ENCODE measurements at regions of chr1 and their contacts with region 1.

Region 1: GRCh38 chr1:180482425-180483275 is 19.7 kb downstream of the ACBD6 start:
- DNase-seq: peak; percentile 79
- H3K4me3 Mint-ChIP-seq: no peak overlapping the region
- H3K27ac Mint-ChIP-seq: no peak overlapping the region
- H3K4me1 Mint-ChIP-seq: peaks cover 17% of the 10 kb centered on the region
- H3K27me3 Mint-ChIP-seq: no peaks in the 10 kb centered on the region
- CTCF ChIP-seq: peak; percentile 68

Region 2: DNA sequence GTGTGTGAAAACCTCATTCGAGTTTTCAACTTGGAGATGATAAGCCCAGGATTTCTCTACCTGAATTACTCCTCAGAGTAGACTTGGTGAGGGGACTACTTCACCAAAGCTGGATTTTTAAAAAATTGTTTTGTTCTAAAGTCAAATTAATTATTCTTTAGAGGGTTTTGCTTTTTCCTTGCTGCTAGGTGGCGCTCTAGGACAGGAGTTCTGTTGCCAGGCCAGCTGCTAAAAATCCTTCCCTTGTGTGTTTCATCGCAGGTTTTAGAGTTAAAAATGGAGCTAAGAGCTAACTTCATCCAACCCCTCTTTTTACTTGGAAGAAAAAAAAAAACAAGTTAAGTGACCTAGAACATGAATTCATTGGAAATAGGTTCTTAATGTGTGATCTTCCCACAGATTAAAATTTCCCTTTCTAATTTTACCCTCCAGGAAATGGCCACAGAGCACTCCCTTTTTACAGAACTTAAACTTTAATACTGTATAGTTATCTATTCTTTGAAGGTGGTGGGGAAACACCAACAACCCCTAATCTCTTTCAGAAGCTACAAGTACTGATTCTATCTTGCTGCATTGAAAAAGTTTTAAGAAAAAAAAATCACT is 776.2 kb before region 1 on chr1:
- CTCF ChIA-PET with region 1: interaction called, 5 read pairs
- POLR2A ChIA-PET with region 1: no interaction called
- intact Hi-C with region 1: loop called (anchors 2 kb)
- DNase-seq: peak; percentile 78
- H3K4me3 Mint-ChIP-seq: no peak overlapping the region
- H3K27ac Mint-ChIP-seq: no peak overlapping the region
- H3K4me1 Mint-ChIP-seq: no peaks in the 10 kb centered on the region
- H3K27me3 Mint-ChIP-seq: peaks cover 18% of the 10 kb centered on the region
- CTCF ChIP-seq: peak; percentile 92

Region 3: GRCh38 chr1:180252638-180253536 is 229.8 kb before region 1 on chr1:
- CTCF ChIA-PET with region 1: interaction called, 57 read pairs
- POLR2A ChIA-PET with region 1: interaction called, 4 read pairs
- intact Hi-C with region 1: loop called (anchors 1 kb)
- DNase-seq: peak; percentile 84
- H3K4me3 Mint-ChIP-seq: no peak overlapping the region
- H3K27ac Mint-ChIP-seq: no peak overlapping the region
- H3K4me1 Mint-ChIP-seq: peaks cover 6% of the 10 kb centered on the region
- H3K27me3 Mint-ChIP-seq: peaks cover 5% of the 10 kb centered on the region
- CTCF ChIP-seq: peak; percentile 97

Region 4: DNA sequence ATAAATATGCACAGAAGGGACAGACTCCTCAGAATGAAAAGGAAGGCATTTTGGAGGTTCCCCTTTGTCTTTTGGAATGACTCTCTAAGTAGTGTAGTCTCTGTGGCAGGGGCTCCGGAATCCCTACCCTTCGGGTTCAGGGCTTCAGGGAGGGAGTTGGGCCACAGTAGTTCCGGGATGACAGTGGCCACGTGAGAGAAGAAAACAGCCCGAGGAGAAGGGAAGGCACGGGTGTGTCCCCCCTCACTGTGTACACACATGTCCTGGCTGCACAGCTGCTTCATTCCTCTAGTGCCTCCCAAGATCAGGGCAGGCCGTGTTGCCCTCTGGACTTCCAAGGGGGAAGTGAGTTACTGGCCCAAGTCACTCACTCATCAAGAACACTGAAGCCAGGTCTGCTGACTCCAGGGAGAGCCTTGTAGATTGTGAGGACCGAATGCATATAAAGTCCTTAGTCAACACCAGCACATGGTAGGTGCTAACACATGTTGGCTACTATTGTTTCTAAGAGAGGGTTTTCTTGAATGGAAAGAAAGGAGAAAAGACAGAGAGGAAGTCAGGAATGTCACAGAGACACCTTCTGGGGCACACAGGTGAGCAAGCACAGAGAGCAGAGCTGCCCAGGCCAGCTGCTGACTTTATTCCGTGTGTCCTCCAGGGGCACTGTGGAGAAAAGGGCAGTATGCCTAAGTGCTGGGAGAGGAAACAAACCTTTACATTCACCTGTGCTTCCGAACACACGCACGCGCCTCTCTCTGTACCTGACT is 212.7 kb before region 1 on chr1:
- CTCF ChIA-PET with region 1: interaction called, 21 read pairs
- POLR2A ChIA-PET with region 1: no interaction called
- intact Hi-C with region 1: no loop called
- DNase-seq: peak; percentile 62
- H3K4me3 Mint-ChIP-seq: no peak overlapping the region
- H3K27ac Mint-ChIP-seq: no peak overlapping the region
- H3K4me1 Mint-ChIP-seq: no peaks in the 10 kb centered on the region
- H3K27me3 Mint-ChIP-seq: no peaks in the 10 kb centered on the region
- CTCF ChIP-seq: peak; percentile 48

Region 5: DNA sequence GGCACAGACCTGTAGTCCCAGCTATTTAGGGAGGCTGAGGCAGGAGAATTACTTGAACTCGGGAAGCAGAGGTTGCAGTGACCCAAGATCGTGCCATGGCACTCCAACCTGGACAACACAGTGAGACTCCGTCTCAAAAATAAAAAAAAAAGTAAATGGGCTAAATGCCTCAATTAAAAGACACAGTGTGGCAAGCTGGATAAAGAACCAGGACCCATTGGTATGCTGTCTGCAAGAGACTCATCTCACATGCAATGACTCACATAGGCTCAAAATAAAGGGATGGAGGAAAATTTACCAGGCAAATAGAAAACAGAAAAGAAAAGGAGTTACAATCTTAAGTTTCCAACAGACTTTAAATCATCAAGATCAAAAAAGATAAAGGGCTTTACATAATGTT is 20.5 kb before region 1 on chr1:
- CTCF ChIA-PET with region 1: interaction called, 91 read pairs
- POLR2A ChIA-PET with region 1: interaction called, 4 read pairs
- intact Hi-C with region 1: no loop called
- DNase-seq: peak; percentile 8
- H3K4me3 Mint-ChIP-seq: no peak overlapping the region
- H3K27ac Mint-ChIP-seq: no peak overlapping the region
- H3K4me1 Mint-ChIP-seq: peaks cover 5% of the 10 kb centered on the region
- H3K27me3 Mint-ChIP-seq: no peaks in the 10 kb centered on the region
- CTCF ChIP-seq: no peak

Region 6: DNA sequence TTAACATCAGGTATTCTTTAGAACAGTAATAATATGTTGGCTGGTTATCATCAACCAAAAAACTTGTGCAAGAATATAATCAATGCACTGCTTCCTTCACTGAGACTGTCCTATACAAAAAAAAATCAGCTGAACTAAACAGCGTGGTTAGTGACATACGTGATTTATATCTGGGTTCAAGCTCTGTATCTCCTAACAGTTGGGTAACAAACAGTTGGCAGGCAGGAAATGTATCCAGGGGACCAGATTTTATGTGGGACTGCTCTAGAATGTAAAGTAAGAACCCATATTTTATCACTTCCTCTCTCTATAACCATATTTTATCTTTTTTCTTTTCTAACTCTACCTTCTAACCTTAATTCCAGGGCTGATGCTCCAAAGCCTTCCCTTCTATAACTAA is 11.7 kb after region 1 on chr1:
- CTCF ChIA-PET with region 1: interaction called, 37 read pairs
- POLR2A ChIA-PET with region 1: interaction called, 4 read pairs
- intact Hi-C with region 1: no loop called
- DNase-seq: no peak
- H3K4me3 Mint-ChIP-seq: no peak overlapping the region
- H3K27ac Mint-ChIP-seq: no peak overlapping the region
- H3K4me1 Mint-ChIP-seq: peaks cover 22% of the 10 kb centered on the region
- H3K27me3 Mint-ChIP-seq: no peaks in the 10 kb centered on the region
- CTCF ChIP-seq: no peak

Region 7: DNA sequence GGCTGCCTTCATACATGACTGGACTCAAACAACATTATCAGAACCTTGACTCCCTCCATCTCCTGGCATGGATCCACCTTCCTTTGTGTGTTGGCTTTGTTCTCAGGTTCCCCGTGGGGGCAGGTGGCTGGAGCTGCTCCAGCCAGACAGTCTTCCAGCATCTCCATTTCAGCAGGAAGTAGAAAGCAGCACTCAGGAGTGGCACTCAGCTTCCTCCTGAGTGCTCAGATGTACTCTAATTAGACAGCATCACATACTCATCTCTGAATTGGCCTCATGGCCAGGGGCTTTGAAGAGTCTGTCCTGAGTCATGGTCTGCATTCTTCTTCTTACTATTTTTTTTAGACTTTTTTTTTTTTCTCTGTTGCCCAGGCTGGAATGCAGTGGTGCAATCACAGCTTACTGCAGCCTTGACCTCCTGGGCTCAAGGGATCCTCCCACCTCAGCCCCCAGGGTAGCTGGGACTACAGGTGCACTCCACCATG is 104.1 kb after region 1 on chr1:
- CTCF ChIA-PET with region 1: no interaction called
- POLR2A ChIA-PET with region 1: no interaction called
- intact Hi-C with region 1: no loop called
- DNase-seq: peak; percentile 93
- H3K4me3 Mint-ChIP-seq: no peak overlapping the region
- H3K27ac Mint-ChIP-seq: peak overlapping the region; percentile 99
- H3K4me1 Mint-ChIP-seq: peaks cover 34% of the 10 kb centered on the region
- H3K27me3 Mint-ChIP-seq: no peaks in the 10 kb centered on the region
- CTCF ChIP-seq: no peak

Region 8: GRCh38 chr1:180791806-180792205 is 309.2 kb after region 1 on chr1:
- CTCF ChIA-PET with region 1: no interaction called
- POLR2A ChIA-PET with region 1: no interaction called
- intact Hi-C with region 1: no loop called
- DNase-seq: peak; percentile 51
- H3K4me3 Mint-ChIP-seq: no peak overlapping the region
- H3K27ac Mint-ChIP-seq: no peak overlapping the region
- H3K4me1 Mint-ChIP-seq: peaks cover 23% of the 10 kb centered on the region
- H3K27me3 Mint-ChIP-seq: no peaks in the 10 kb centered on the region
- CTCF ChIP-seq: no peak

Measured in MCF 10A (cell line).